Activated CD4-positive, alpha-beta T cell treated with anti-CD3 and anti-CD28 coated beads for 36 hours (primary cell): ENCODE measurements at regions of chr1 and their contacts with region 1.

Region 1: DNA sequence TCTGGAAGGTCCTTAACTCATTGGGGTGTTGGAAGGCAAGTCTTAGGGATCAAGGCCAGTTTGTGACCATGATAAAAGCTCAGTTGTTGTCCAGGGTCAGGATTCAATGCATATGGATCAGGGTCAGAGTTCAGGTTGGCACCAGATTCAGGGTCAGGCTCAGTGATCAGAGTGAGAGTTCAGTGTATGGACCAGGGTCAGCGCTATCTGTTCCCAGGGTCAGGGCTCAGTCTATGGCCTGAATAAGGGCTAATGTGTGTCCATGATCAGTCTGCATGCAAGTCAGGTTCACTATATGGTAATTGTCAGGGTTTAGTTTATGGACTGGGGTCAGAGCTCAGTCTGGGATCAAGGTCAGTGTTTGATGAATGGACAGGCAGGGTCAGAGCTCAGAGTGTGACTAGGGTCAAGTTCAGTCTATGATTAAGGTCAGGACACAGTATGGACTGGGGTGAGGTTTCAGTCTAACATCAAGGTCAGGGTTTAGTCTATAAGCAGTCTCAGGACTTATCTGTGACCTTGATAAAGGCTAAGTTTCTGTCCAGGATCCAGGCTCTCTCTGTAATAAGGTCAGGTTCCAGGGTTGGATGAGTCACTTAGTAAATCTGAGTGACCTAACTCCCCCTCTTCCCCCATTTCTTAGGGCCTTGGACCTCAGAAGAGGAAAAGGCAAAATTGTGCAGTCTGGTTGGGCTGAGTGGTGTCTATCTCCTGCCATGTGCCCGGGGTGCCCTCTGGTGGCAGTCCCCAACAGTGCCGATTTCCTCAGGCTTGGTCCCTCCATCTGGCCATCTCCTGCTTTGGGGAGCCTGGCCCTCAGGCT is 23.8 kb downstream of the KNCN start:
- DNase-seq: peak; percentile 89
- ATAC-seq: peak; percentile 73
- H3K4me3 Mint-ChIP-seq: no peak overlapping the region
- H3K27ac Mint-ChIP-seq: no peak overlapping the region
- H3K4me1 Mint-ChIP-seq: peaks cover 17% of the 10 kb centered on the region
- H3K27me3 Mint-ChIP-seq: peaks cover 33% of the 10 kb centered on the region

Region 2: DNA sequence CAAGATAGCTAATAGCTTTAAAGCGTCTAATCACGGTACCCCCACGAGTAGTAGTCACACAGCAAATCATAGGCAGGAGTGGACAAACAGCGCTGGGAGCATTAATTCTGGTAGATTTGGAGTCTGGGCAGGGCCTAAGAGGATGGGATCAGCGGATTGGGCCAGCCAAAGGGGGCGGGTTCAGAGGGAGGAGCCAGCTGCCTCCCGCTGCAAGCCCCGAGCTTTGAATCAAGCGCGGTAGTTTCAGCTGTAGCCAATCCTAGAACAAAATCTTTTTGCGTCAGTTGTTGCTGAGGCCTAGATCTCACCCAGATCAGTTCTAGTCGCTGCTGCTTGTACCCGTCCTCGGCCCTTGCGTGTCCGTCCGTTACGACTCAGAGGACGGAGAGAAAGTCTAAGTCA is 944.4 kb before region 1 on chr1:
- CTCF ChIA-PET with region 1: no interaction called
- POLR2A ChIA-PET with region 1: no interaction called
- intact Hi-C with region 1: no loop called
- DNase-seq: peak; percentile 97
- ATAC-seq: peak; percentile 84
- H3K4me3 Mint-ChIP-seq: peak overlapping the region; percentile 91
- H3K27ac Mint-ChIP-seq: peak overlapping the region; percentile 100
- H3K4me1 Mint-ChIP-seq: peaks cover 20% of the 10 kb centered on the region
- H3K27me3 Mint-ChIP-seq: no peaks in the 10 kb centered on the region

Region 3: DNA sequence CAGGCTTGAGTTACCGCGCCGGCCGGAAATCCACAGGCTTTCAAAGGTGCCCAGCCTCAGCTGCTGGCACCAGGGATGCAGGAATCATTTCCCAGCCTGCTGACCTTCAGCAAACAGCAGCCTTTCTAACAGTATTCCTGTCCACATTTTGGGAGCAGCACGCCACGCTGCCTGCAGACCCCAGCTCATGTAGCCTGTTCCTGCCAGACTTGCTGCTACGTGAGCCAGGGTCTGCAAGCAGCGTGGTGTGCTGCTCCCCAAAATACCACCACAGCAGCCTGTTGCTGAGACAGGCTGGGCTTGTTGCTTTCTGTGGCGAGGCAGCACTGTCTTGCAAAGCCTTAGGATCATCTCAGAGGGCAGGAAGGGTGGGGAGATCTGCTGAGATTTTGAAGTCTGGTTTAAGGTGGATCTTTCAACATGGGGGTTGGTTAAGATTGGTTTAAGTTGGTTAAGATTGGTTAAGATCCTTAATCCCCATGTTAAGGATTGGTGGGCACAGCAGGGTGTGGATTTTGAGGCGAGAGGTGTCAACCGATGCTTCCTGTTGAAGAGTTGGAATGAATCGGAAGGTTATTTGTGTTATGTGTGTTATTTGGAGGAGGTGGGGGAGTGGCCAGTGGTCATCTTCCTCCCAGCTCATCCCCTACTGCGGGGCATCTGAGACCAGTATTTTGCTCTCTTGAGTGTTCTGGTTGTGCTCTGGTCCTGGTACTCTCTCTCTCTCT is 120.6 kb before region 1 on chr1:
- CTCF ChIA-PET with region 1: interaction called, 6 read pairs
- POLR2A ChIA-PET with region 1: no interaction called
- intact Hi-C with region 1: loop called (anchors 1 kb)
- DNase-seq: no peak
- ATAC-seq: no peak
- H3K4me3 Mint-ChIP-seq: no peak overlapping the region
- H3K27ac Mint-ChIP-seq: no peak overlapping the region
- H3K4me1 Mint-ChIP-seq: no peaks in the 10 kb centered on the region
- H3K27me3 Mint-ChIP-seq: no peaks in the 10 kb centered on the region

Region 4: GRCh38 chr1:46477153-46477929 is 50.3 kb before region 1 on chr1:
- CTCF ChIA-PET with region 1: interaction called, 115 read pairs
- POLR2A ChIA-PET with region 1: interaction called, 3 read pairs
- intact Hi-C with region 1: loop called (anchors 1 kb)
- DNase-seq: peak; percentile 89
- ATAC-seq: peak; percentile 98
- H3K4me3 Mint-ChIP-seq: no peak overlapping the region
- H3K27ac Mint-ChIP-seq: no peak overlapping the region
- H3K4me1 Mint-ChIP-seq: no peaks in the 10 kb centered on the region
- H3K27me3 Mint-ChIP-seq: peaks cover 24% of the 10 kb centered on the region

Region 5: GRCh38 chr1:46489638-46490405 is 37.9 kb before region 1 on chr1 and contains the start of gene DMBX1:
- CTCF ChIA-PET with region 1: interaction called, 19 read pairs
- POLR2A ChIA-PET with region 1: no interaction called
- intact Hi-C with region 1: loop called in 1 of 2 experiments (anchors 1 kb)
- DNase-seq: peak; percentile 74
- ATAC-seq: peak; percentile 79
- H3K4me3 Mint-ChIP-seq: peak within 1 kb of the TSS; percentile 66
- H3K27ac Mint-ChIP-seq: no peak within 1 kb of the TSS
- H3K4me1 Mint-ChIP-seq: peaks cover 22% of the 10 kb centered on the region
- H3K27me3 Mint-ChIP-seq: peaks cover 76% of the 10 kb centered on the region
- total RNA-seq, gene DMBX1: 0.05 TPM in 1 of 2 experiments, not detected in the other

Region 6: DNA sequence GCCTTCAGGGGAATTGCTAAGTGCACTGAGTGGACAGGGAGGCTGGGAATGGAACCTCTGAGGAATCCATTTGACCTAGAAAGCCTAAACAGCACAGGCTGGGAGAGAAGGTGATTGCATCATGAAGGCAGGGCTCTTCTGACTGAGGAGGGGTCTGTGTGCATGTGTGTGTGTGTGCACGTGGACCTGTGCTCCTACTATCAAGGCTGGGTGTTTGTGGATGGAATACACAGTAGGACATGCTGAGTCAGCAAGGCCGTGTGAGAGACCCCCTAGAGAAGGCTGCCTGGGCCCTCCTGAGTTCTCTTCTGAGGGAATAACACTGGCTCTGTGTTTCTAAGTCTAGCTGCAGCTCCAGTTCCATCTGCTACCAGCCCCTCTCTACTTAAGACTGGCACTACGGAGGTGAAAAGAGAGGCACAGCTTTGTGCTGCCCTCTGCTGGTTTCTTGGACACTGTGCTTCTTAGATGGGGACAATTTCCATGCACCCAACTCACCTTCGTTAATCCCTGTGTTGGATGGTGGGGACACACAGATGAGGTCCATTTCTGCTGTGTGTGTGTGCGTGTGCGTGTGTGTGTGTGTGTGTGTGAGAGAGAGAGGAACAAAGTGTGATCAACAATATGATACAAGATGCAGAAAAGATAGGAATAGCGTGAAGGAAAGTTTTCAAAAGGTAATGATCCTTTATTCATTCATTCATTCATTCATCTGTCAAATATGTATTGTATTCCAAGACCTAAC is 197.5 kb after region 1 on chr1:
- CTCF ChIA-PET with region 1: interaction called, 11 read pairs
- POLR2A ChIA-PET with region 1: no interaction called
- intact Hi-C with region 1: loop called in 1 of 2 experiments (anchors 5 kb)
- DNase-seq: peak; percentile 80
- ATAC-seq: peak; percentile 98
- H3K4me3 Mint-ChIP-seq: no peak overlapping the region
- H3K27ac Mint-ChIP-seq: no peak overlapping the region
- H3K4me1 Mint-ChIP-seq: no peaks in the 10 kb centered on the region
- H3K27me3 Mint-ChIP-seq: peaks cover 29% of the 10 kb centered on the region